Natural killer cell (primary cell): ENCODE measurements at regions of chr13 and their contacts with region 1.

Region 1: DNA sequence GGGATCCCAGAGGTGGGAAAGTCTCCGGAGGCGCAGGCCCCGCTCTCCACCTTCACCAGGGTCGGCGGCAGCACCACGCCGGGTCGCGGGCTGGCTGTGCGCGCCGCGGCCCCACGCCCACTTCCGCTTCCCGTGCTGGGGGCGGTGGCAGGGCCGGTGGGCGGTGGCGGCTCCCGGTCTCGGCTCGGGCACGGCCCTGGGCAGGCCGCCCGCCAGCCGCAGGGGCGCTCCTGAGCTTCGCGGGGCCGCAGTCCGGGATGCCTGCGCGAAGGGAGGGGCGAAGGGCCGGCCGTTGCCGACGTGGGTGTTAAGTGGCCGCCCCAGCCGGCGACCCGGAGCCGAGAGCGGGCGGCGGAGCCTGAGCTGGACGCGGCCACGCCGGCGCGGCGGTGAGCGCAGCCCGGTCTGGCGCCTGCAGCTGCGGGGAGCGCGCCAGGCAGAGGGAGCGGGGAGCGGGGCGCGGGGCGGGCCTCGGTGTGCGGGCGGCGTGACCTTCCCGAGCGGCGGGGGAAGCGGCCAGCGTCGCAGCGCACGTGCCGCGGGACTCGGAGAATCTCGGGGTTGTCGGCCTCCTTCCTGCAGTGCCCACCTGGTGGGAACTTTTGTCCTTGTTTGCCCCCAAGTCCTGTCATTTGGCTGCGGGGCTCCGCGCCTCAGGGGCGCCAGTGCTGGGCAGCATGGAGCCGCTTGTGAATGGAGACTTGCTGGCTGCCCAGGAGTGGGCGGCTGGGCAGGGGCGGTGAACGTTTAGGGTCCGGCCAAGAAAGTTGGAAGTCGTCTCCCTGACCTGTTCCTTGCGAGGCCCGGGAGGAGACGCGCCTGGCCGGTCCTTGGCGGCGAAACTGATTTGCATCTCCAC is at the start of gene SLC25A15:
- DNase-seq: peak; percentile 71 to 81
- ATAC-seq: peak; percentile 90 to 92 (median 91)
- H3K4me3 ChIP-seq: peak within 1 kb of the TSS; percentile 66
- H3K4me3 Mint-ChIP-seq: peak within 1 kb of the TSS; percentile 75
- H3K27ac ChIP-seq: peak within 1 kb of the TSS; percentile 70
- H3K27ac Mint-ChIP-seq: peak within 1 kb of the TSS; percentile 22 to 26
- H3K4me1 ChIP-seq: peaks cover 15% of the 10 kb centered on the region
- H3K4me1 Mint-ChIP-seq: peaks cover 5 to 6% of the 10 kb centered on the region in 2 donors
- H3K27me3 ChIP-seq: no peaks in the 10 kb centered on the region
- H3K27me3 Mint-ChIP-seq: no peaks in the 10 kb centered on the region
- CTCF ChIP-seq: no peak
- total RNA-seq, gene SLC25A15: 4.0 to 6.0 (median 5.8) TPM

Region 2: DNA sequence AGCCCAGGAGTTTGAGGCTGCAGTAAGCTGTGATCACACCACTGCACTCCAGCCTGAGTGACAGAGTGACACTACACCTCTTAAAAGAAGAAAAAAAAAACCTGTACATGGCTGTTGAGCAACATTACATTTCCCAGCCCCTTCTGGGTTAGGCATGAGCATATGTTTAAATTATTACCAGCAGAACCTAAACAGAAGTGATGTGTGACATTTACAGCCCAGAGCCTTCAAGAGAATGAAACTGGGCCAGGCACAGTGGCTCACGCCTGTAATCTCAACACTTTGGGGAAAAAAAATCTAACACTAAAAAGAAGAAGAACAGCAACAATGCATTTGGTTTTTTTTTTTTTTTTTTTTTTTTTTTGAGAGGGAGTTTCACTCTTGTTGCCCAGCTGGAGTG is 56.8 kb before region 1 on chr13:
- intact Hi-C with region 1: no loop called
- DNase-seq: no peak
- ATAC-seq: peak in 2 of 3 donors; percentile 85 to 95
- H3K4me3 ChIP-seq: no peak overlapping the region
- H3K4me3 Mint-ChIP-seq: no peak overlapping the region
- H3K27ac ChIP-seq: no peak overlapping the region
- H3K27ac Mint-ChIP-seq: peak overlapping the region; percentile 25 to 52
- H3K4me1 ChIP-seq: no peaks in the 10 kb centered on the region
- H3K4me1 Mint-ChIP-seq: peaks cover 26 to 28% of the 10 kb centered on the region in 2 donors
- H3K27me3 ChIP-seq: no peaks in the 10 kb centered on the region
- H3K27me3 Mint-ChIP-seq: no peaks in the 10 kb centered on the region
- CTCF ChIP-seq: no peak

Region 3: DNA sequence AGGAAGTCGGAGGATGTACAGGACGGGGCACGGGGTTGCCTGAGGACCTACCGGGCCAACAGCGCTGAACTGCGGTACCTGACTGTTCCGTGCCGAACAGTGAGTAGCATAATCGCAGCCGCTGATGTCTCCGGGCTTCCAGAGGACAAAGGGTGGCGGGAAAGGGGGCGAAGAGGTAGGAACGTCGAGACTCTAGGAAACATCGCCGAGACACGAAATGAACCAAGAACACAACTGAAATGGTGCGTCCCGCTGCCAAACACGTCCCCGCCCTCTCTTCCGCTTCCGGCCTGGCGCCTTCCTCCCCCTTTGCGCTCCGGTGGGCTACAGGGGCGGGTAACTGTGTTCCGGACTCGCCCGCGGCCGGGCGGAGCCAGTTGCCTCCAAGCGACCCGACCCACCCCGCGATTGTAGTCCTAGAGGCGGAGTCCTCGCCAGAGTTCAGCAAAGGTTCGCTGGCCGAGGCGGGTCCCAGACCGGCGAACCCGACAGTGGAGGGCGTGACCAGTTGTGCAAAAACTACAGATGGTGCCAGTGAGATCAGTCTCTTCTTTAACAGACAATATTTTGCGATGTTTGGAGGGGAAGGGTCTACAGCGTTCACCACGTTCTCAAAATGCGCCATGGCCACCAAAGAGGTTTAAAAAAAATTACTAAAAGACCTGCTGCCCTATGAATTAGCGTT is 18.4 kb before region 1 on chr13 and contains the start of gene MRPS31:
- intact Hi-C with region 1: loop called (anchors 2 kb)
- DNase-seq: peak; percentile 93 to 96
- ATAC-seq: peak; percentile 97 to 100 (median 98)
- H3K4me3 ChIP-seq: peak within 1 kb of the TSS; percentile 78
- H3K4me3 Mint-ChIP-seq: peak within 1 kb of the TSS; percentile 97
- H3K27ac ChIP-seq: peak within 1 kb of the TSS; percentile 75
- H3K27ac Mint-ChIP-seq: peak within 1 kb of the TSS; percentile 92 to 95
- H3K4me1 ChIP-seq: peaks cover 13% of the 10 kb centered on the region
- H3K4me1 Mint-ChIP-seq: peaks cover 13 to 19% of the 10 kb centered on the region in 2 donors
- H3K27me3 ChIP-seq: no peaks in the 10 kb centered on the region
- H3K27me3 Mint-ChIP-seq: no peaks in the 10 kb centered on the region
- CTCF ChIP-seq: no peak
- total RNA-seq, gene MRPS31: 13.6 to 19.6 (median 13.8) TPM